ENCODE measurements at regions of chr4 and their contacts with region 1.

Region 1: GRCh38 chr4:40629401-40630334 is at the start of gene RBM47:
- DNase-seq: no peak
- H3K4me3 Mint-ChIP-seq: peak within 1 kb of the TSS; percentile 98
- H3K27ac Mint-ChIP-seq: peak within 1 kb of the TSS; percentile 90
- H3K4me1 Mint-ChIP-seq: peaks cover 41% of the 10 kb centered on the region
- H3K27me3 Mint-ChIP-seq: peaks cover 9% of the 10 kb centered on the region
- total RNA-seq, gene RBM47: 32.9 and 34.8 TPM in 2 replicates

Region 2: GRCh38 chr4:40462326-40462725 is 167.3 kb before region 1 on chr4:
- intact Hi-C with region 1: loop called (anchors 10 kb)
- DNase-seq: no peak
- H3K4me3 Mint-ChIP-seq: no peak overlapping the region
- H3K27ac Mint-ChIP-seq: peak overlapping the region; percentile 17
- H3K4me1 Mint-ChIP-seq: peaks cover 32% of the 10 kb centered on the region
- H3K27me3 Mint-ChIP-seq: no peaks in the 10 kb centered on the region

Region 3: GRCh38 chr4:40579983-40580382 is 49.7 kb before region 1 on chr4:
- intact Hi-C with region 1: loop called (anchors 2 kb)
- DNase-seq: no peak
- H3K4me3 Mint-ChIP-seq: no peak overlapping the region
- H3K27ac Mint-ChIP-seq: peak overlapping the region; percentile 38
- H3K4me1 Mint-ChIP-seq: peaks cover 56% of the 10 kb centered on the region
- H3K27me3 Mint-ChIP-seq: peaks cover 1% of the 10 kb centered on the region

Region 4: GRCh38 chr4:40672536-40673526 is 43.2 kb after region 1 on chr4:
- intact Hi-C with region 1: loop called (anchors 1 kb)
- DNase-seq: peak; percentile 63
- H3K4me3 Mint-ChIP-seq: peak overlapping the region; percentile 51
- H3K27ac Mint-ChIP-seq: peak overlapping the region; percentile 90
- H3K4me1 Mint-ChIP-seq: peaks cover 53% of the 10 kb centered on the region
- H3K27me3 Mint-ChIP-seq: no peaks in the 10 kb centered on the region

Region 5: DNA sequence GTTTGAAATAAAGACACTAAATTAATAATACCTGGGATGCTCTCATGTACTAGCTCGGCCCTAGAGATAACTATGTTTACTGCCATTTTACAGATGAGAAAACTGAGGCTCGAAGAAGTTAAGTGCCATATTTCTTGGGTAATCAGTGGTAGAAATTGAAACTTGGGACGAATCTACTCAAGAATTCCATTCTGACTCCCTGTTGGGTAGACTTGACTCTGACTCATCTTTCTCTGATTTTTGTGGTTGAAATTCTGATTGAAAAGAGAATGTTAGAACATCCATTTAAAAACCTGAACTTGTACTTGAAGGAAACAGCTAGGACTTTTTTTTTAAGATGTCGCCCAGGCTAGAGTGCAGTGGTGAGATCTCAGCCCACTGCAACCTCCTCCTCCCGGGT is 70.0 kb after region 1 on chr4:
- intact Hi-C with region 1: loop called (anchors 1 kb)
- DNase-seq: no peak
- H3K4me3 Mint-ChIP-seq: peak overlapping the region; percentile 2
- H3K27ac Mint-ChIP-seq: peak overlapping the region; percentile 74
- H3K4me1 Mint-ChIP-seq: peaks cover 37% of the 10 kb centered on the region
- H3K27me3 Mint-ChIP-seq: no peaks in the 10 kb centered on the region

Measured in activated T-helper 2 cell treated with anti-CD3 and anti-CD28 coated beads, Interferon-gamma antibody, Interleukin-2, Interleukin-4, amounts not matched to agents 10 μg/mL and 5 μg/mL and 100 μg/mL, durations not matched to agents 14 hours and 24 hours and 36 hours (primary cell).